Panc1 (cell line): ENCODE measurements at regions of chr3 and their contacts with region 1.

Region 1: DNA sequence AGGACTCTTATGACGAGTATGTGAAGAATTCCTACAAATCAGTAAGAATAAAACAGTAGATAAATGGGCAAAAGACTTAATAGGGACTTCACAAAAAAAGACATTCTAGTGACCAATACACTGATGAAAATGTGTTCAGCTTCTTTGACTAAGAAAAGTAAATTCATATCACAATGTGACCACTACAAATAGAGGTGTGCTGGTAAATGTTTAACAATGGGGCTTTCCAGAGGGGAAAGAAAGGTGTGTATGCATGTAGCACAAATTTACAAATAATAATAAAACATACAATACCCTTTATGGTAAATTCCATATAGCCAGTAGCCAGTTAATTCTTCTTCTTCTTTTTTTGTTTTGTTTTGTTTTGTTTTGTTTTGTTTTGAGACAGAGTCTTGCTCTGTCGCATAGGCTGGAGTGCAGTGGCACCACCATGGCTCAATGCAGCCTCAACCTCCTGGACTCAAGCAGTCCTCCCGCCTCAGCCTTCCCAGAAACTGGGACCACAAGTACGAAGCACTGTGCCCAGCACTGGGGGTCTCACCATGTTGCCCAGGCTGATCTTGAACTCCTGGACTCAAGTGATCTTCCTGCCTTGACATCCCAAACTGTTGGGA is 17.5 kb upstream of the NMD3 start:
- DNase-seq: no peak
- ATAC-seq: no peak
- H3K4me3 ChIP-seq: no peak overlapping the region
- H3K27ac ChIP-seq: no peak overlapping the region
- H3K4me1 ChIP-seq: no peaks in the 10 kb centered on the region
- H3K27me3 ChIP-seq: no peaks in the 10 kb centered on the region
- CTCF ChIP-seq: no peak

Region 2: DNA sequence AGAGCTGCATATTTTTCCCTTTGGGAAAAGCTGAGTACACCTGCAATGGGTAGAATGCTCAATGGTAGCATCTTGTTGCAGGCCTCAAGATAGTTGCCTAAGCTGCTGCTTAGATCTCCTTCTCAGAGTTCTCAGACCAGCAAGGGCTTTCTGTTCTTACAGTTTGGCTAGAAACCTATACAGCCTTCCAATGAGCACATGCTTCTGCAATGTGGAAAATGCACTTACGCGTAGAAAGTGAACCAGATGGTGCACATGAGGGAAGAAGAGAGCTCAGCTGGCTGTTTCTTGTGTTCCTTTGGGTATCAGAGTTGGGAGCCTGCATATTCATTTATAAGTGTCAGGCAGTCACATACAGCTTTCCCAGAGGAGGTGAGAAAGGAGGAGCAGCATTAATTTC is 234.8 kb before region 1 on chr3:
- CTCF ChIA-PET with region 1: no interaction called
- POLR2A ChIA-PET with region 1: no interaction called
- in situ Hi-C with region 1: no loop called
- intact Hi-C with region 1: loop called (anchors 10 kb)
- DNase-seq: no peak
- ATAC-seq: peak; percentile 51; the same call in 1 of the 2 replicates
- H3K4me3 ChIP-seq: no peak overlapping the region
- H3K27ac ChIP-seq: no peak overlapping the region
- H3K4me1 ChIP-seq: no peaks in the 10 kb centered on the region
- H3K27me3 ChIP-seq: no peaks in the 10 kb centered on the region
- CTCF ChIP-seq: no peak

Region 3: GRCh38 chr3:161305095-161305991 is 101.8 kb after region 1 on chr3:
- CTCF ChIA-PET with region 1: no interaction called
- POLR2A ChIA-PET with region 1: no interaction called
- in situ Hi-C with region 1: no loop called
- intact Hi-C with region 1: no loop called
- DNase-seq: no peak
- ATAC-seq: no peak
- H3K4me3 ChIP-seq: no peak overlapping the region
- H3K27ac ChIP-seq: no peak overlapping the region
- H3K4me1 ChIP-seq: no peaks in the 10 kb centered on the region
- H3K27me3 ChIP-seq: no peaks in the 10 kb centered on the region
- CTCF ChIP-seq: peak; percentile 79